Left ventricle myocardium superior (tissue), 1 donor: ENCODE measurements at regions of chr12 and their contacts with region 1.

Region 1: GRCh38 chr12:121568971-121569751 is 11.7 kb downstream of the KDM2B start:
- DNase-seq: peak; percentile 55
- ATAC-seq: peak; percentile 94

Region 2: GRCh38 chr12:120856980-120857379 is 712.2 kb before region 1 on chr12:
- intact Hi-C with region 1: no loop called
- DNase-seq: no peak
- ATAC-seq: peak; percentile 31

Region 3: DNA sequence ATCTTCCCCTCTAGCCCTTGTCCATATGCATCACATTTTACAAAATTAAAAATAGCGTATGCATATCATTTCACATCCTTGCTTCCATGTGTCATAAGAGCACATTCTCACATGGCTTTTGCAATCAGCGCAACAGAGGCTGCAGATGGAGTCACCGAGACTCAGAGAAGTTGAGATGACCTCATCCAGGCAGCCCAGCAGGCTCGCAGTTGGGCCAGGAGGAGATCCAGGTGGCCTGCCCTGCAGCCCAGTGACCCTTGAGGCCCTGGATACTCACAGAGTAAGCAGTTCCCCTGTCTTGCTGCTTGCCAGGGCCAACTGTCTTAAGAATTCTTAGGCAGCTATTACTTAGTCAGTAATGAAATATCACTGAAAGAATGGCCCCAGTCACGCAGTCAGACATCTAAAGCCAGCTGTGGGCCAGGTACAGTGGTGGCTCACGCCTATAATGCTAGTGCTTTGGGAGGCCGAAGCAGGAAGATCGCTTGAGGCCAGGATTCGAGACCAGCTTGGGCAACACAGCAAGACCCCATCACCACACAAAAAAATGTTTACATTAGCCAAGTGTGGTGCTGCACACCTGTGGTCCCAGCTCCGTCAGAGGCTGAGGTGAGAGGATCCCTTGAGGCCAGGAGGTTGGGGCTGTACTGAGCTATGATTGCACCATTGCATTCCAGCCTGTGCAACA is 281.8 kb before region 1 on chr12:
- intact Hi-C with region 1: no loop called
- DNase-seq: no peak
- ATAC-seq: no peak

Region 4: GRCh38 chr12:121513464-121514183 is 55.5 kb before region 1 on chr12:
- intact Hi-C with region 1: no loop called
- DNase-seq: no peak
- ATAC-seq: peak; percentile 74

Region 5: GRCh38 chr12:121626087-121626852 is 57.1 kb after region 1 on chr12 and contains the start of gene ORAI1:
- intact Hi-C with region 1: loop called (anchors 10 kb)
- DNase-seq: peak; percentile 99
- ATAC-seq: peak; percentile 96
- total RNA-seq, gene ORAI1: 10.1 TPM

Region 6: DNA sequence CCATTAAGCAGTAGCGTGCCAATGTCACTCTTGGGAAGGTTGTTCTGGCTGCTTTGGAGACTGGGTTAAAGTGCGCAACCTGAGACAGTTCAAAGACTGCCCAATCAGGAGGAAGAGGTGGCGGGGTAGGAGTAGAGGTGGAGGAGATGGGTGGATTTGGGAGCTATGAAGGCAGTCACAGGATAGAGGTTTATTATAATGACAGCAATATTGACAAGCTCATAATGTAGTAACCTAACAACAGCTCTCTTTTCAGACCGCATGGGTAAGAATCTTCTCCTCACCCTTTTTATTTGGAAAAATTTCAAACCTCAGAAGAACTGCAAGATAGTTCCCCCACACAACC is 314.1 kb after region 1 on chr12:
- intact Hi-C with region 1: no loop called
- DNase-seq: no peak
- ATAC-seq: no peak